MCF 10A (cell line): ENCODE measurements at regions of chr7 and their contacts with region 1.

Region 1: DNA sequence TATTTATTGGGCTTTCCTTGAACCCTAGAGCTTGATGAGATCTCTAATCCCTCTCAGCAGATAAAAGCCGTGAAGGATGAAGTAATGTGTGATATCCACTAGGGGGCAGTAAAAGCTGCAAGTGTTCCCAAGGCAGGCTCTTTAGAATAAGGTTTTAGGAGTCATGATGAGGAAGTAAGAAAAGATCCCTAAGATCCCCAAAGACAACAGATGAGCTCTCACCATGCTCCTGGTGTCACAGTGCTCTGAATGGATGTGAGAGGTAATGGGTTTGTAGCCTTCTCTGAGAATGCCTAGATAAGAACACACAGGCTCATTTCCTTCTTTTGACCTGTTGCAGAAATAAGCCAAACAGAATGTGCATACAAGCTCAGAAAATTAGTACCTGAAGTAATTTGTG is 70.4 kb upstream of the ITPRID1 start:
- DNase-seq: peak; percentile 57
- H3K4me3 Mint-ChIP-seq: no peak overlapping the region
- H3K27ac Mint-ChIP-seq: no peak overlapping the region
- H3K4me1 Mint-ChIP-seq: no peaks in the 10 kb centered on the region
- H3K27me3 Mint-ChIP-seq: peaks cover 28% of the 10 kb centered on the region
- CTCF ChIP-seq: peak; percentile 72

Region 2: GRCh38 chr7:31134246-31135188 is 308.9 kb before region 1 on chr7:
- CTCF ChIA-PET with region 1: interaction called, 10 read pairs
- POLR2A ChIA-PET with region 1: no interaction called
- intact Hi-C with region 1: loop called (anchors 1 kb)
- DNase-seq: peak; percentile 84
- H3K4me3 Mint-ChIP-seq: no peak overlapping the region
- H3K27ac Mint-ChIP-seq: no peak overlapping the region
- H3K4me1 Mint-ChIP-seq: no peaks in the 10 kb centered on the region
- H3K27me3 Mint-ChIP-seq: peaks cover 26% of the 10 kb centered on the region
- CTCF ChIP-seq: peak; percentile 77

Region 3: GRCh38 chr7:31327071-31327470 is 116.4 kb before region 1 on chr7:
- CTCF ChIA-PET with region 1: no interaction called
- POLR2A ChIA-PET with region 1: no interaction called
- intact Hi-C with region 1: no loop called
- DNase-seq: no peak
- H3K4me3 Mint-ChIP-seq: no peak overlapping the region
- H3K27ac Mint-ChIP-seq: no peak overlapping the region
- H3K4me1 Mint-ChIP-seq: no peaks in the 10 kb centered on the region
- H3K27me3 Mint-ChIP-seq: peaks cover 12% of the 10 kb centered on the region
- CTCF ChIP-seq: no peak

Region 4: DNA sequence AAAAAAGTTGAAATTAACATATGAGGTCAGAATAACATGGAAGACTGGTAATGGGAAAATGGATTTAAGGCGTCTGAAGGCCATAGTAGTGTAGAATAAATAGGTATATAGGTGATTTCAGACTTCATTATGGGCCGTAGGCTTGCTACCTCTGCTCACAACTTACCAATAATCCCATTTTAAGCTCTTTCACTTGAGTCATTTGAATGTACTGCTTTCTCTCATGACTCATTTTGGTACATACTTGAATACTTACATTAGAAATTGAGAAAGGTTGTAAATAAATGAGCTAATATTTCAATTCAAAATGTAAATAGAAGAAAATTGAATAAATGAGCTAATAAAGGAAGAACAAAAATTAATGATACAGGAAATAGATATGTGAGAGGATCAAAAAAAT is 60.7 kb before region 1 on chr7:
- CTCF ChIA-PET with region 1: interaction called, 71 read pairs
- POLR2A ChIA-PET with region 1: no interaction called
- intact Hi-C with region 1: no loop called
- DNase-seq: no peak
- H3K4me3 Mint-ChIP-seq: no peak overlapping the region
- H3K27ac Mint-ChIP-seq: no peak overlapping the region
- H3K4me1 Mint-ChIP-seq: peaks cover 6% of the 10 kb centered on the region
- H3K27me3 Mint-ChIP-seq: no peaks in the 10 kb centered on the region
- CTCF ChIP-seq: no peak

Region 5: GRCh38 chr7:31419505-31420055 is 23.9 kb before region 1 on chr7:
- CTCF ChIA-PET with region 1: interaction called, 36 read pairs
- POLR2A ChIA-PET with region 1: no interaction called
- intact Hi-C with region 1: no loop called
- DNase-seq: no peak
- H3K4me3 Mint-ChIP-seq: no peak overlapping the region
- H3K27ac Mint-ChIP-seq: no peak overlapping the region
- H3K4me1 Mint-ChIP-seq: no peaks in the 10 kb centered on the region
- H3K27me3 Mint-ChIP-seq: no peaks in the 10 kb centered on the region
- CTCF ChIP-seq: no peak

Region 6: GRCh38 chr7:31466036-31466435 is 22.6 kb after region 1 on chr7:
- CTCF ChIA-PET with region 1: interaction called, 25 read pairs
- POLR2A ChIA-PET with region 1: no interaction called
- intact Hi-C with region 1: no loop called
- DNase-seq: no peak
- H3K4me3 Mint-ChIP-seq: no peak overlapping the region
- H3K27ac Mint-ChIP-seq: no peak overlapping the region
- H3K4me1 Mint-ChIP-seq: peaks cover 6% of the 10 kb centered on the region
- H3K27me3 Mint-ChIP-seq: no peaks in the 10 kb centered on the region
- CTCF ChIP-seq: no peak

Region 7: GRCh38 chr7:31493714-31494181 is 50.3 kb after region 1 on chr7:
- CTCF ChIA-PET with region 1: interaction called, 11 read pairs
- POLR2A ChIA-PET with region 1: no interaction called
- intact Hi-C with region 1: loop called (anchors 1 kb)
- DNase-seq: no peak
- H3K4me3 Mint-ChIP-seq: no peak overlapping the region
- H3K27ac Mint-ChIP-seq: no peak overlapping the region
- H3K4me1 Mint-ChIP-seq: no peaks in the 10 kb centered on the region
- H3K27me3 Mint-ChIP-seq: no peaks in the 10 kb centered on the region
- CTCF ChIP-seq: no peak

Region 8: GRCh38 chr7:32204361-32205018 is 761.0 kb after region 1 on chr7:
- CTCF ChIA-PET with region 1: interaction called, 3 read pairs
- POLR2A ChIA-PET with region 1: no interaction called
- intact Hi-C with region 1: loop called (anchors 5 kb)
- DNase-seq: peak; percentile 87
- H3K4me3 Mint-ChIP-seq: peak overlapping the region; percentile 38
- H3K27ac Mint-ChIP-seq: no peak overlapping the region
- H3K4me1 Mint-ChIP-seq: no peaks in the 10 kb centered on the region
- H3K27me3 Mint-ChIP-seq: peaks cover 10% of the 10 kb centered on the region
- CTCF ChIP-seq: peak; percentile 92